Posterior vena cava (tissue), 2 donors: ENCODE measurements at regions of chr9 and their contacts with region 1.

Region 1: GRCh38 chr9:136283291-136284235 is 20.3 kb downstream of the CCDC187 start:
- DNase-seq: peak; percentile 94

Region 2: DNA sequence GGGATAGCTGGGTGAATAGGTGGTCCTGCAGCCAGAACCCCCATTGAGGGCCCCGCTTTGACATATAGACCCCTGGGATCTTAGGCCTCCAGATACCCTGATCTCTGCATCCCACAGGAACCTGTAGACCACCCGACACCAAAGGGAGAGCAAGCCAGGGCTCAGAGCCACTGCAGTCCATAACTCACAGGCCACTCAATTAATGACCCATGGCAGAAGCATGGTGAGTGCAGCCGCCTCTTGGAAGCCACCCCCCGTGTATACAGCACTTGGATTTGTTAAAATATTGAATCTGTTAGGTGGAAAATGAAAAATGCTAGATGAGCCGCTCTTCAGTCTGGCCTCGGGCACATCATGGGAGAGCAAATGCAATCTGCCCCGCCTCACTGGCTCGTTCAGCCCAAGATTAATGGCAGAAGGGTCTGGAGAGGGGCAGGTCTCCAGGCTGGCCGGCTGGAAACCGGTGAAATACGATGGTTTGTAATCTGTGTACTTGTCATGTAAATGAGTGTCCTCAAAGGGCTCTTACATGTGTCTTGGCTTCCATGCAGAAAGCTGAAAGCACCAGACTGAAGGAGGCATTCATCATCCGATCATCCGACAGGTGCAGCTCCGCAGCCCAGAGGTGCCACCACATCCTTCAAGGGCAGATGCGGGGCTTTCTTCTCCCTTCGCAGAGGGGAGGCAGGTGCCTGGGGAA is 1084.8 kb before region 1 on chr9:
- intact Hi-C with region 1: no loop called
- DNase-seq: no peak

Region 3: DNA sequence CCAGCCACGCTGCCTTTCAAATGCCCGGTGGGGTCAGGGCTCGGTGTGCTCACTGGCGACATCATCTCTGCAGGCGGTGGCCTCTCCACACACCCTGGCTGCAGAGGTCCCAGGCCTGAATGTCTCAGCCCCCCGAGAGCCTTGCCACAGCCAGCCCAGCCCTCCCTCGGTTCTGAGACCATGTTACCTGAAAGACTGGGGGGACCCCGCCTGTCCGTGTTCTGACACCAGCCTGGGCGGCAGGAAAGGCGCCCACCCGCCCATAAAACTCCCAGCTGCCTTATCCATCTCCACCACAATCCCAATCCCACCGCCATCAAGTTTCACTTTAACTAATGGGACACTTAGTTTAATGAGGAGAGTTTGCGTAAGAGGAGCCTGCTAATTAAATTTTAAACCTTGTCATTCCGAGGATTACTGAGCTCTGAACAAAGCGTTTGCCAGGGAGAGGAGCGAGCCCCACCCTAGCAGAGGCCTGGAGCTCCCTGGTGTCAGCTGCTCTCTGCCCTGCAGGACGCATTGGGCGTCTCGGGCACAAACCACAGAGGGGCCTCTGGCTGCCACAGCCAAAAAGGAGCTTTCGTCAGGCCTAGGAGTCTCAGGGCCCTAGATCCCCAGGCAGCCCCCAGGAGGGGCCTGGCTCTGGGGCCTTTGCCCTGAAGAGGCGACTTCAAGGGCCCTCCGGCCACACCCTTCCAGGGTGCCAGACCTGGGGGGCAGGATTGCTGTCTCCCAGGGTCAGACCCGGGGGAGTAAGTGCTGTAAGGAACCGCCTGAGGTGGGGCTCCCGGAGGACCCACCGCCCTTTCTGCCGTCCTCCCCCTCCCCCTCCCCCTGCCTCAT is 93.9 kb before region 1 on chr9:
- intact Hi-C with region 1: loop called in 1 of 2 experiments (anchors 10 kb)
- DNase-seq: no peak

Region 4: DNA sequence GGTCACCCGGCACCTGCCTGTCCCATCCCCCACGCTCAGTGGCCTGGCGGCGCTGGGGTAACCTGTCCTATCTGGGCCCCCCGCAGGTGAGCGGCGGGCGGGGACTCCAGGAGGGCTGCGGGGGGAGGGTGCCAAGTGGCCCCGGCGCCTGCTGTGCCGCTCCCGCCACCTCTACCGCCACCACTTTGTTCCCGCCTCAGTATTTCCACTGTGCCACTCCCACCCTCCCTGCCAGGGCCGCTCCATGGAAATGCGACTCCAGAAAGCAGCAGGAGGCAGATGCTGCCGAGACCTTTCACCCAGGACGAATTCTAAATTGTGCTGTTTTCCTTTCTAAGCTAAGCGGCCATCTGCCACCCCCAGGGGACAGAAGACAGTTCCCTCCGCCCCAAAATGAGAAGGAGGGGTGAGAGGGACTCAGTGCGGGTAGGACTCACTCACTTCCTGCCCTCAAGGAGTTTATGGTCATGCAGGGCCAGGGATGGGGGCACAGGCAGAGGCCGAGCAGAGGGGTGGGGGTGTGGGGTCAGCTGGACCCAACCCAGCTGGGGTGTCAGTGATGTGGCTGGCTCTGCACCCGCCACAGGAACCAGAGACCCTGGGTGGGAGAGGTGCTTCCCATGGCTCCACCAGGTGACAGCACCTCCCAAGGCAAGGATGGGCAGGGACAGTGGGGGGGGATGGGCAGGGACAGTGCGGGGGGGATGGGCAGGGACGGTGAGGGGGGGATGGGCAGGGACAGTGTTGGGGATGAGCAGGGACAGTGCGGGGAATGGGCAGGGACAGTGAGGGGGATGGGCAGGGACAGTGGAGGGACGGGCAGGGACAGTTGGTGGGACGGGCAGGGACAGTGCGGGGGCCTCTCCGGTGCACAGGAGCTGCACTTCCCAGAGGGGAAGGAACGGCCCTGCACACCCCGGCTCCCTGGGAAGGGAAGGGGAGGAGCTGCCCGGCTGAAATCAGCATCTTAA is 244.4 kb after region 1 on chr9:
- intact Hi-C with region 1: no loop called
- DNase-seq: no peak